ENCODE measurements at regions of chr17 and their contacts with region 1.

Region 1: DNA sequence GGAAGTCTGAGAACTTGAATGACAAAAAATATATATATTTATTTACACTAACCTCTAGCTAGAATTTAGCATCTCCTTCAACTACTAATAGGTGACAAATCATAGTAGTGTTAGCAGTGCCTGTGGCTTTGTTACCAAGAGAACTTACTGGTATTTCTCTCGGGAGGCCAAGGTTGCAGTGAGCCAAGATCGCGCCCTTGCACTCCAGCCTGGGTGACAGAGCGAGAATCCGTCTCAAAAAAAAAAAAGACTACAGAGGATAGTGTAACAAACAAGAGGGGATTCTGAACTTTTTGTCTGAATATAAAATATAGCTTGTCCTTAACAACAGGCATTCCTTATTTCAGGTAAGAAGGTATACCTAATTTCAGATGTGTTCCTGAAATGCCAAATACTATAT is 1.3 kb upstream of the SUZ12 start:
- DNase-seq: no peak
- ATAC-seq: no peak
- H3K4me3 ChIP-seq: no peak overlapping the region
- H3K27ac ChIP-seq: no peak overlapping the region
- H3K4me1 ChIP-seq: no peaks in the 10 kb centered on the region
- H3K27me3 ChIP-seq: no peaks in the 10 kb centered on the region
- CTCF ChIP-seq: no peak
- EP300 ChIP-seq: no peak
- POLR2A ChIP-seq: no peak
- RAD21 ChIP-seq: no peak

Region 2: GRCh38 chr17:31997005-31997404 is 61.5 kb after region 1 on chr17:
- CTCF ChIA-PET with region 1: no interaction called
- POLR2A ChIA-PET with region 1: no interaction called
- RAD21 ChIA-PET with region 1: no interaction called
- SMC1A ChIA-PET with region 1: no interaction called
- in situ Hi-C with region 1: no loop called
- intact Hi-C with region 1: loop called (anchors 10 kb)
- DNase-seq: no peak
- ATAC-seq: no peak
- H3K4me3 ChIP-seq: no peak overlapping the region
- H3K27ac ChIP-seq: no peak overlapping the region
- H3K4me1 ChIP-seq: no peaks in the 10 kb centered on the region
- H3K27me3 ChIP-seq: no peaks in the 10 kb centered on the region
- CTCF ChIP-seq: no peak
- EP300 ChIP-seq: no peak
- POLR2A ChIP-seq: no peak
- RAD21 ChIP-seq: no peak

Measured in GM12878 (cell line).